Gastrocnemius medialis (tissue), 4 donors: ENCODE measurements at regions of chr6 and their contacts with region 1.

Region 1: GRCh38 chr6:170522565-170523183 is 30.4 kb downstream of the PSMB1 start:
- DNase-seq: peak in 1 of 2 donors; percentile 32
- ATAC-seq: peak in 1 of 2 donors; percentile 12
- H3K4me3 ChIP-seq: no peak overlapping the region
- H3K27ac ChIP-seq: peak overlapping the region; percentile 89 to 97 (median 96)
- H3K4me1 ChIP-seq: peaks cover 52 to 55% of the 10 kb centered on the region in 2 donors
- H3K27me3 ChIP-seq: no peaks in the 10 kb centered on the region
- CTCF ChIP-seq: no peak
- POLR2A ChIP-seq: no peak

Region 2: GRCh38 chr6:169789982-169790927 is 732.4 kb before region 1 on chr6:
- in situ Hi-C with region 1: no loop called
- intact Hi-C with region 1: loop called (anchors 2 kb)
- DNase-seq: peak; percentile 32 to 33
- ATAC-seq: peak; percentile 88 to 94
- H3K4me3 ChIP-seq: peak overlapping the region; percentile 49 to 75 (median 54)
- H3K27ac ChIP-seq: peak overlapping the region; percentile 8 to 69 (median 44)
- H3K4me1 ChIP-seq: peaks cover 0 to 18% of the 10 kb centered on the region in 2 donors
- H3K27me3 ChIP-seq: no peaks in the 10 kb centered on the region
- CTCF ChIP-seq: peak; percentile 82 to 99 (median 92)
- POLR2A ChIP-seq: no peak

Region 3: GRCh38 chr6:170039156-170040107 is 483.2 kb before region 1 on chr6:
- in situ Hi-C with region 1: no loop called
- intact Hi-C with region 1: loop called (anchors 5 kb)
- DNase-seq: peak in 1 of 2 donors; percentile 3
- ATAC-seq: no peak
- H3K4me3 ChIP-seq: no peak overlapping the region
- H3K27ac ChIP-seq: no peak overlapping the region
- H3K4me1 ChIP-seq: peaks cover 16 to 30% of the 10 kb centered on the region in 2 donors
- H3K27me3 ChIP-seq: no peaks in the 10 kb centered on the region
- CTCF ChIP-seq: no peak
- POLR2A ChIP-seq: no peak

Region 4: GRCh38 chr6:170306324-170307079 is 216.2 kb before region 1 on chr6 and contains the start of gene FAM120B:
- in situ Hi-C with region 1: loop called in 2 of 4 experiments (anchors 10 kb)
- intact Hi-C with region 1: loop called (anchors 5 kb)
- DNase-seq: peak; percentile 94 to 96
- ATAC-seq: peak; percentile 96 to 99
- H3K4me3 ChIP-seq: peak within 1 kb of the TSS; percentile 79 to 98 (median 88)
- H3K27ac ChIP-seq: peak within 1 kb of the TSS; percentile 85 to 95 (median 89)
- H3K4me1 ChIP-seq: peaks cover 25 to 46% of the 10 kb centered on the region in 2 donors
- H3K27me3 ChIP-seq: no peaks in the 10 kb centered on the region
- CTCF ChIP-seq: no peak
- POLR2A ChIP-seq: peak; percentile 96 to 99
- total RNA-seq, gene FAM120B: 10.7 to 17.0 (median 13.5) TPM

Region 5: DNA sequence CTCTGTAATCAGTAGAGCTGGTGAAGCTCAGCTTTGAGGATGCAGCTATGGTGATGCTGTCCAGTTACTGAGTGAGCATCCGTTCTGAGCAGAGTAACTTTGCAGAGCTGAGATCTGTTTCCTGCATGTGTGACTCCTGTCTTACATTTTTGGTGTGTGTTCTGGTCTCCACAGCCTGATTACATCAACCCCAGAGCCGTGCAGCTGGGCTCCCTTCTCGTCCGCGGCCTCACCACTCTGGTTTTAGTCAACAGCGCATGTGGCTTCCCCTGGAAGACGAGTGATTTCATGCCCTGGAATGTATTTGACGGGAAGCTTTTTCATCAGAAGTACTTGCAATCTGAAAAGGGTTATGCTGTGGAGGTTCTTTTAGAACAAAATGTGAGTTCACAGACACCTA is 134.6 kb before region 1 on chr6:
- in situ Hi-C with region 1: no loop called
- intact Hi-C with region 1: no loop called
- DNase-seq: no peak
- ATAC-seq: no peak
- H3K4me3 ChIP-seq: no peak overlapping the region
- H3K27ac ChIP-seq: no peak overlapping the region
- H3K4me1 ChIP-seq: peaks cover 5 to 7% of the 10 kb centered on the region in 2 donors
- H3K27me3 ChIP-seq: no peaks in the 10 kb centered on the region
- CTCF ChIP-seq: no peak
- POLR2A ChIP-seq: no peak

Region 6: GRCh38 chr6:170438402-170438753 is 84.3 kb before region 1 on chr6:
- in situ Hi-C with region 1: no loop called
- intact Hi-C with region 1: loop called (anchors 2 kb)
- DNase-seq: peak; percentile 97 to 98
- ATAC-seq: peak; percentile 80 to 81
- H3K4me3 ChIP-seq: peak overlapping the region; percentile 23 to 38 (median 26)
- H3K27ac ChIP-seq: peak overlapping the region; percentile 84 to 97 (median 92)
- H3K4me1 ChIP-seq: peaks cover 34 to 58% of the 10 kb centered on the region in 2 donors
- H3K27me3 ChIP-seq: no peaks in the 10 kb centered on the region
- CTCF ChIP-seq: no peak
- POLR2A ChIP-seq: peak; percentile 70 to 71